BJ (cell line): ENCODE measurements at regions of chrX and their contacts with region 1.

Region 1: GRCh38 chrX:108537005-108537404 is 97.4 kb downstream of the COL4A5 start:
- DNase-seq: no peak
- H3K4me3 ChIP-seq: no peak overlapping the region
- H3K27me3 ChIP-seq: no peaks in the 10 kb centered on the region
- CTCF ChIP-seq: peak; percentile 54

Region 2: GRCh38 chrX:108224727-108225621 is 312.0 kb before region 1 on chrX:
- CTCF ChIA-PET with region 1: interaction called, 12 read pairs
- POLR2A ChIA-PET with region 1: no interaction called
- DNase-seq: no peak
- H3K4me3 ChIP-seq: no peak overlapping the region
- H3K27me3 ChIP-seq: no peaks in the 10 kb centered on the region
- CTCF ChIP-seq: peak; percentile 54

Region 3: GRCh38 chrX:108399427-108400162 is 137.4 kb before region 1 on chrX:
- CTCF ChIA-PET with region 1: no interaction called
- POLR2A ChIA-PET with region 1: no interaction called
- DNase-seq: peak; percentile 9
- H3K4me3 ChIP-seq: no peak overlapping the region
- H3K27me3 ChIP-seq: no peaks in the 10 kb centered on the region
- CTCF ChIP-seq: no peak